A549 (cell line): ENCODE measurements at regions of chr7 and their contacts with region 1.

Region 1: DNA sequence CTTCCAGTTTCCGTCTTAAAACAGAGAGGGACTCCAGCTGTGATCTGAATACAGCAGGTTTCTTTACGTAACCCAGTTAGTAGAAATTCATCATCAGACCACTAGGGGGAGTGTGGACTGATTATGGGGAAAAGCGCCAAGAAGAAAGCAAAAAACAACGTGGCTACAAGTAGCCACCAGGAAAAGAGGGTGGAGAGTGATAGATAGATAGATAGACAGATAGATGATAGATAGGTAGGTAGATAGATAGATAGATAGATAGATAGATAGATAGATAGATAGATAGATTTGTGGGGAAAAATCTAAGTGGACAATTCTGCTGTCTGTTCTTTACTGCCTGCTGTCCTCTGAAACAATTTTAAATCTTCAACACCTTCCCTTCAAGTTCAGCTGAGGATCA is 12.7 kb upstream of the AKR1B10 start:
- DNase-seq: peak; percentile 91 to 92
- ATAC-seq: peak; percentile 63 to 71
- H3K4me3 ChIP-seq: no peak overlapping the region
- H3K27ac ChIP-seq: peak overlapping the region; percentile 68 to 83
- H3K4me1 ChIP-seq: peaks cover 37% of the 10 kb centered on the region
- CTCF ChIP-seq: peak; percentile 97
- EP300 ChIP-seq: no peak
- POLR2A ChIP-seq: no peak
- RAD21 ChIP-seq: peak; percentile 71 to 82

Region 2: GRCh38 chr7:134108813-134109212 is 405.9 kb before region 1 on chr7:
- CTCF ChIA-PET with region 1: no interaction called
- POLR2A ChIA-PET with region 1: no interaction called
- DNase-seq: peak in 1 of 2 experiments; percentile 18
- ATAC-seq: peak; percentile 52 to 56; a peak in 4 of 6 replicates
- H3K4me3 ChIP-seq: no peak overlapping the region
- H3K27ac ChIP-seq: no peak overlapping the region
- H3K4me1 ChIP-seq: no peaks in the 10 kb centered on the region
- CTCF ChIP-seq: peak; percentile 32; the same call in 1 of the 3 replicates
- EP300 ChIP-seq: no peak
- POLR2A ChIP-seq: no peak
- RAD21 ChIP-seq: peak; percentile 27 to 39; a peak in 2 of 5 replicates

Region 3: GRCh38 chr7:134355927-134356326 is 158.7 kb before region 1 on chr7:
- CTCF ChIA-PET with region 1: interaction called, 11 read pairs
- POLR2A ChIA-PET with region 1: no interaction called
- DNase-seq: peak in 1 of 2 experiments; percentile 51
- ATAC-seq: peak in 1 of 2 experiments; percentile 24; a peak in 4 of 6 replicates
- H3K4me3 ChIP-seq: no peak overlapping the region
- H3K27ac ChIP-seq: peak overlapping the region; percentile 56 to 60; a peak in 5 of 6 replicates
- H3K4me1 ChIP-seq: peaks cover 23% of the 10 kb centered on the region
- CTCF ChIP-seq: no peak
- EP300 ChIP-seq: no peak; a peak in 1 of 5 replicates
- POLR2A ChIP-seq: no peak
- RAD21 ChIP-seq: no peak

Region 4: DNA sequence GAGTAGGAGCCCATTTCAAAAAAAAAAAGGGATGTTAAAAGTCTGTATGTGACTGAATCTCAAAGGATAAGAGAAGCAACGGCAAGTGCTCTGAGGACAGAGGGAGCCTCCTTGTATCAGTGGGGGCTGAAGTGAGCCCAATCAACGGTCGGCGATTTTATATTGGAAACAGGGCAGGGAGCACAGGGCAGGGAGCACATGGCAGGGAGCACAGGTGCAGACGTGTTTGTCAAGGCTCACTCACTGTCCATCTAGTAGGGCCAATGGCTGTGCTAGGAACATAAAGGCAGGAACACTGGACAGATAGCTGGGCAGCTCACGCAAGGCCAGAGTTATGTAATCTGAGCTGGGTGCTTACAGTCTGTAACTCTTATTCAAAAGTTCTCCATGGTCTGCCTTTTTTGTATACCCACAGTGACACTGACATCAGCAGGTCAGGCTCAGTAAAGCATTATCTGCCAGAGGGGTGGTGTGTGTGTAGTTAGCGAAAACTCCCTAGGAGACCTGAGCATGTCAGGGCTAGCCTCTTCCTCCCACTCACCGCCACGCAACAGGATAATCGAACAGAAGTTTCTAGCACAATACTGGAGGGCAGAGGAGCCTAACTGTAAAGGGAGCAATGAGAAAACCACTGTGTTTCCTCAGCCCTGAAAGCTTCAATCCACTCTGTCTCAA is 71.1 kb before region 1 on chr7:
- CTCF ChIA-PET with region 1: interaction called, 486 read pairs
- POLR2A ChIA-PET with region 1: no interaction called
- DNase-seq: no peak
- ATAC-seq: no peak
- H3K4me3 ChIP-seq: no peak overlapping the region
- H3K27ac ChIP-seq: peak overlapping the region; percentile 5 to 94; a peak in 4 of 6 replicates
- H3K4me1 ChIP-seq: peaks cover 44% of the 10 kb centered on the region
- CTCF ChIP-seq: no peak
- EP300 ChIP-seq: no peak
- POLR2A ChIP-seq: no peak
- RAD21 ChIP-seq: no peak

Region 5: GRCh38 chr7:134480736-134481135 is 33.9 kb before region 1 on chr7:
- CTCF ChIA-PET with region 1: interaction called, 199 read pairs
- POLR2A ChIA-PET with region 1: no interaction called
- DNase-seq: peak; percentile 59 to 82
- ATAC-seq: peak; percentile 83 to 86
- H3K4me3 ChIP-seq: no peak overlapping the region
- H3K27ac ChIP-seq: peak overlapping the region; percentile 62 to 67
- H3K4me1 ChIP-seq: peaks cover 60% of the 10 kb centered on the region
- CTCF ChIP-seq: no peak
- EP300 ChIP-seq: no peak
- POLR2A ChIP-seq: no peak
- RAD21 ChIP-seq: peak; percentile 13 to 18; a peak in 1 of 5 replicates

Region 6: DNA sequence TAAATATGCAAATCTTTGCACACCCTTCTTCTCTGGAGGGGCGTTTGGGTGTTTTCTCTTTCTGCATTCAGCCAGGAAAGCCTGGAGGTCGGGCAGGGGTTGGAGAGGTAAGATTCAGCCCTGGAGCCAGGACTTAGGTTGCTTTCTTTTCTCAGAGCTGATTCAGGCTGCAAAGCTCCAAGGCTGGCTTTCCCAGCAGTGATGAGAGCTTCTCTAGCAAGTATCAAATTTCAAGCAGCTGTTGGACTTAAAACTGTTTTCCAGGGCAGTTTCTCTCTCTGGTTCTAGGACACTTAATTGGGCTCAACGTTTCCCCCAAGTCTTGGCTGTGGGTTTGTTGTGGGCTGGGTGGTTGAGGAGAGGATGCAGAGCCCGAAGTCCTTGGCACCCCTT is 13.3 kb after region 1 on chr7:
- CTCF ChIA-PET with region 1: interaction called, 47 read pairs
- POLR2A ChIA-PET with region 1: no interaction called
- DNase-seq: no peak
- ATAC-seq: peak in 1 of 2 experiments; percentile 9; a peak in 4 of 6 replicates
- H3K4me3 ChIP-seq: peak overlapping the region; percentile 84
- H3K27ac ChIP-seq: peak overlapping the region; percentile 91 to 98
- H3K4me1 ChIP-seq: peaks cover 54% of the 10 kb centered on the region
- CTCF ChIP-seq: no peak
- EP300 ChIP-seq: no peak
- POLR2A ChIP-seq: no peak; the same call in 1 of the 2 replicates
- RAD21 ChIP-seq: no peak

Region 7: GRCh38 chr7:134571746-134572461 is 57.2 kb after region 1 on chr7:
- CTCF ChIA-PET with region 1: interaction called, 914 read pairs
- POLR2A ChIA-PET with region 1: no interaction called
- DNase-seq: no peak
- ATAC-seq: no peak
- H3K4me3 ChIP-seq: no peak overlapping the region
- H3K27ac ChIP-seq: no peak overlapping the region
- H3K4me1 ChIP-seq: peaks cover 2% of the 10 kb centered on the region; the same call in 1 of the 3 replicates
- CTCF ChIP-seq: no peak
- EP300 ChIP-seq: no peak
- POLR2A ChIP-seq: no peak
- RAD21 ChIP-seq: no peak

Region 8: DNA sequence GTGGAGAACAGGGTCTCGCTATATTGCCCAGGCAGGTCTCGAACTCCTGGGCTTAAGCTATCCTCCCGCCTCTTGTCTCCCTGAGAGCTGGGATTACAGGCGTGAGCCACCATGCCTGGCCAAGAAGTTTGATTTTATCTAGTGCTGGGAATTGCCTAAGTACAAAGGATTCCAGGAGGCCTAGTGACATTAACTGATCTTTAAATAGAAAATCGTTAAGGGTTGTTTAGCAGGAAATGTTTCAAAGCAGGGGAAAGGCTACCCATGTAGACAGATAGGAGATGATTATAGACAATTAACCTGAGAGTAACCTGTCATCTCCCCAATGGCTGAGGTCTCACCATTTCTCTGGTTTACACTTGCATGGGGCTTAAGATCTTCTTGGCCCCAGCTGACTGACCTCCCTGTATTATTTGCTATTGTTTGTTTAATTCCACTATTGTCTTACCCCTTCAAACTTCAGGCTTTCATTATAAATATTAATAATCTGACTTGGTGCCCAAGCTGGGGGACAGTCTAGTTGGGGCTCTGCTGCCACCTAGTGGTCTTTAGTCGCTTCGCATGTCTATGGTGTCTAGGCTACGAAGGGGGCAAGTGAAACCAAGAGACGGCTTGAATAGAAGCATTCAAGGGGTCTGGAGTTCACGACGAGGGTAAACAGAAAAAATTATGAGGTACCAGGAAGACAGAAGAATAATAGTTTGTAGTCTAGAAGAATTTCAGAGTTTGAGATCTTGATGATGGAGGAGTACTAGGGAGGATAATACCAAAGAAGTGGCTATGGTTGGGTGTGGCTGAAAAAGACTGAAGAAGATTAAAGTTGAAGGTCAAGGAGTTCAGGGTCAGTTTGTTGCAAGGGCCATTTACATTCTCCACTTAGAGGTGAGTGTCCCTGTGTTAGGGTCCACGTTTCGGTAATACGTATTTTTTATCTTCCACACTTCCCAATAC is 91.6 kb after region 1 on chr7:
- CTCF ChIA-PET with region 1: interaction called, 453 read pairs
- POLR2A ChIA-PET with region 1: no interaction called
- DNase-seq: peak; percentile 62 to 81
- ATAC-seq: peak; percentile 89 to 94
- H3K4me3 ChIP-seq: no peak overlapping the region
- H3K27ac ChIP-seq: peak overlapping the region; percentile 64 to 82
- H3K4me1 ChIP-seq: peaks cover 47% of the 10 kb centered on the region
- CTCF ChIP-seq: peak; percentile 99
- EP300 ChIP-seq: no peak; a peak in 1 of 5 replicates
- POLR2A ChIP-seq: no peak
- RAD21 ChIP-seq: peak; percentile 100